H1 (cell line): ENCODE measurements at regions of chr4 and their contacts with region 1.

Region 1: DNA sequence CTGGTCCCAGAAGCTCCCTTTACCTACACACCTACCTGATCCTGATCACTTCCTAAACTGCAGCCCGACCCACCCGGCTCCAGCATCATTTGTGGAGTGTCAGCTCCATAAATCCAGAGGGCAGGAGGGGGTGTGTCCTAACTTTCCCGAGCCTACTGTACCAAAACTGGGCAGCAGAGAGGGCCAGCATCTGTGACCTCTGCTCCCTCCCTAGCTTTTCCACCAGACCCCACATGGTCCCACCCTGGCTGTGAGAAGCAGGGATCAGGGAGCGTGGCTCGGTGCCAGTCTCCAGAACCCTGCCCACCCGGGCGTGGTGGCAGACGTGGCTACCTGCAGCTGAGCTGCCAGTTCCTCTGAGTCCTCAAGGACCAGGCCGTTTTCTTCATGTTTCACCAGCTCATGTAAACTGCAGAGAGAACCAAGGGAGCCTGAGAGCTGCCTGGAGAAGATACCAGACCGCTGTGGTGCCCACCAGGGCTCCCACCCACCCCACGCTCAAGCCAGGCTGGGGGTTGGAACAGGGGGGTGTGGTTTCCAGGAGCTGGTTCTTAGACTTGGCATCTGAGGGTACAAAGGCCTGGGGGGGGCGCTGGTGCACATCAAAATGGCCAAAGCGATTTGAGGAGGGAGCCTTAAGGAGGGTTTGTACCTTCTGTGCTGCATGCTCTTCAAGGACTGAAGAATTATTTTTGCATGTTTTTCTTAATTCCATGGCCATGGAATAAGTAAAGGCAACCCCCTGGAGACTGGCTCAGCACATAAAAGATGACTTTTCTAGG is 76.7 kb upstream of the DRD5 start:
- DNase-seq: no peak
- H3K4me3 ChIP-seq: no peak overlapping the region
- H3K27ac ChIP-seq: no peak overlapping the region
- H3K4me1 ChIP-seq: no peaks in the 10 kb centered on the region
- H3K27me3 ChIP-seq: no peaks in the 10 kb centered on the region
- CTCF ChIP-seq: peak in 1 of 3 experiments; percentile 1; a peak in 1 of 4 replicates
- EP300 ChIP-seq: no peak
- POLR2A ChIP-seq: no peak
- RAD21 ChIP-seq: peak in 1 of 2 experiments; percentile 20; a peak in 1 of 4 replicates

Region 2: DNA sequence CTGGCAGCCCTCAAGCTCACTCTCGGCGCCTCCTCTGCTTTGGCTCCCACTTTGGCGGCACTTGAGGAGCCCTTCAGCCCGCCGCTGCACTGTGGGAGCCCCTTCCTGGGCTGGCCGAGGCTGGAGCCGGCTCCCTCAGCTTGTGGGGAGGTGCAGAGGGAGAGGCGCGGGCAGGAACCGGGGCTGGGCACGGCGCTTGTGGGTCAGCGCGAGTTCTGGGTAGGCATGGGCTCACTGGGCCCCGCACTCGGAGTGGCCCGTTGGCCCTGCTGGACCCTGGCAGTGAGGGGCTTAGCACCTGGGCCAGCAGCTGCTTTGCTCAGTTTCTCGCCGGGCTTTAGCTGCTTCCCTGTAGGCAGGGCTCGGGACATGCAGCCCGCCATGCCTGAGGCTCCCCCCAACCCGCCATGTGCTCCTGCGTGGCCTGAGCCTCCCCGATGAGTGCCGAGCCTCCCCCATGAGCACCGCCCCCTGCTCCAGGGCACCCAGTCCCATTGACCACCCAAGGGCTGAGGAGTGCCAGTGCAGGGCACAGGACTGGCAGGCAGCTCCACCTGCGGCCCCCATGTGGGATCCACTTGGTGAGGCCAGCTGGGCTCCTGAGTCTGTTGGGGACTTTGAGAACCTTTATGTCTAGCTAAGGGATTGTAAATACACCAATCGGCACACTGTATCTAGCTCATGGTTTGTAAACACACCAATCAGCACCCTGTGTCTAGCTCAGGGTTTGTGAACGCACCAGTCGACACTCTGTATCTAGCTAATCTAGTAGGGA is 24.9 kb before region 1 on chr4:
- CTCF ChIA-PET with region 1: no interaction called
- POLR2A ChIA-PET with region 1: no interaction called
- DNase-seq: no peak
- H3K4me3 ChIP-seq: no peak overlapping the region
- H3K27ac ChIP-seq: no peak overlapping the region
- H3K4me1 ChIP-seq: no peaks in the 10 kb centered on the region
- H3K27me3 ChIP-seq: no peaks in the 10 kb centered on the region
- CTCF ChIP-seq: no peak
- EP300 ChIP-seq: no peak
- POLR2A ChIP-seq: no peak
- RAD21 ChIP-seq: no peak

Region 3: DNA sequence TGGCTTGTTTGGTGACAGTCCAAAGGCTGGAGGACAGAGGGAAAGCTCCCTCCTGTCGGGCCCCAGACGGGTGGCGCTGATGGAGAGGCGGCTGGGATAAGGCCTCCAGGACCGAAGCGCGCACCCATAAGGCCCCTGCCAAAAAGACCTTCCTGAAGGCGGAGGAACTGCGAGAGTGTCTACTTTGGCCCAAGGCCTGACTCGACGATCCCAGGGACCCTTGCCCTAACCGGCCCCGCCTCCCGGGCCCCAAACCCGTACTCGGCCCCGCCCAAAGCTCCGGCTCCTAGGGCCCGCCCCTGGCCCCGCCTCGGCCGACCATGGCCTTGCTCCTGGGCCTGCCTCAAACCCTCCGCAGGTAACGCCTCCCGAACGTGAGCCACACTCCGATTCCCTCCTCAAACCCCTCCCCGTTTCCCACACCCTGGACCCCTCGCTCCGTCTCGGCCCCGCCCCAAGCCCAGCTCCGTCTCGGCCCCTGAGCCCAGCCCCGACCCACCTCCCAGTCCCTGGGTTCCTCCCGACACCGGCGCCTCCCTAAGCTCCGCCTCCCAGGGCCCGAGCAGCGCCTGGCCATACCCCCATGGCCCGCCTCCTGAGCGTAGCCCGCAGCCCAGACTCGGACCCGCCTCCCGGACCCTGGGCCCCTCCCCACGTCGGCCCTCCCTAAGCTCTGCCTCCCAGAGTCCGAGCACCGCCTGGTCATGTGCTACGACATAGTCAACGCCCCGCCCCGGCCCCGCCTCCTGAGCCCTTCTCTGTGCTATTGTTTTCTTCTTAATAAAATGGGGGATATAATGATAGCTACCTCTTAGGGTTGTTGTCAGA is 13.3 kb before region 1 on chr4:
- CTCF ChIA-PET with region 1: interaction called, 10 read pairs
- POLR2A ChIA-PET with region 1: interaction called, 3 read pairs
- DNase-seq: peak; percentile 92 to 97
- H3K4me3 ChIP-seq: peak overlapping the region; percentile 30 to 60 (median 46); a peak in 7 of 8 replicates
- H3K27ac ChIP-seq: peak overlapping the region; percentile 63; the same call in 1 of the 2 replicates
- H3K4me1 ChIP-seq: peaks cover 0 to 5% (median under 1%) of the 10 kb centered on the region in 4 experiments; a peak in 1 of 7 replicates
- H3K27me3 ChIP-seq: no peaks in the 10 kb centered on the region
- CTCF ChIP-seq: no peak
- EP300 ChIP-seq: no peak
- POLR2A ChIP-seq: peak in 1 of 2 experiments; percentile 47; a peak in 1 of 3 replicates
- RAD21 ChIP-seq: no peak

Region 4: DNA sequence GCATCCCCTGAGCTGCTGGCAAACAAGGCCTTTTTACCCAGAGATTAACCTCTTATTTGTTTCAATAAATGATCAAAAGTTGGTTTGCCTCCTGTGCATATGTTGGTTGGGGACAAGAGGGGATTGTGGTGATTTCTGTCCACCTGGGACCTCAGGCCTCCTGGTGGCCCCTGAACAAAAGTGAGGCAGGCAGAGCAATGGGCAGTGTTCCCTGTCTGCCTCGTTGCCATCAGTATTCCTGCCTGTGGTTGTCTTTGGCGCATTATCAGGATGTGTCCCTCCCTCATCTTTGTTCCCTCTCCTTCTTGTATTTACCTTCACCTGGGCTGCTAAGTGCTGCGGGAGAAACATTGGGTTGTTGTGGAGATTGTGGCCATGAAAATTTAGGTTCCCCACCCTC is 11.4 kb after region 1 on chr4:
- CTCF ChIA-PET with region 1: interaction called, 15 read pairs
- POLR2A ChIA-PET with region 1: no interaction called
- DNase-seq: no peak
- H3K4me3 ChIP-seq: no peak overlapping the region
- H3K27ac ChIP-seq: no peak overlapping the region
- H3K4me1 ChIP-seq: no peaks in the 10 kb centered on the region
- H3K27me3 ChIP-seq: no peaks in the 10 kb centered on the region
- CTCF ChIP-seq: no peak
- EP300 ChIP-seq: no peak
- POLR2A ChIP-seq: no peak
- RAD21 ChIP-seq: no peak

Region 5: DNA sequence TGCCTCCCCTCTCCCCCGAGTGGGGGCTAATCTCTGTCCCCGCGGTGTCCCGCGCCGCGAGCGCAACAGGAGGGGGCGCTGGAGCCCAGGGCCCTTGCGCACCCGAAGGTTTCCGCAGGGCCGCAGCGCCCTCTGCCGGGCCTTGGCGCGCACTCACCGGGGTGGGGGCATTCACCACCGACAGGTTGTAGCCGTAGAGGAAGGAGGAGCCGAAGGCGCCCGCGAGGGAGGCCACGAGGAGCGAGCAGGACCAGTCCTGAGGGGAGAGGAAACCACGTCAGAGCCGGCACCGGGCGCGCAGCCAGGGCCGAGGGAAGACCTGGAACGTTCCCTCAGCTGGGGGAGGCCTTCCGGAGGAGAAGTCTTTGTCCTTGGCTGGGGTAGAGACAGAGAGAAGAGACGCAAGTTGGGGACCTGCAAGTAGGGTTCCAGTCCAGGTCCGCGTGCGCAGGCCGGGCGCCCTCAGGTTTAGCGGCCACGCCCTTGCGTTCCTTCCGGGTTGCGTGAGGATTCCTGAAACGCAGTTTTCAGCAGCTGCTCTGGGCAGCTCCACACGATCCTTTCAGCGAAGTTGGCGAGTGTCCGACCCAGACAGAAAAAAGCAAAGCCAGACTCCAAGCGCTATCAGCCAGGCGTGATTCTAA is 314.2 kb after region 1 on chr4:
- CTCF ChIA-PET with region 1: interaction called, 86 read pairs
- POLR2A ChIA-PET with region 1: no interaction called
- DNase-seq: peak; percentile 79 to 99
- H3K4me3 ChIP-seq: peak overlapping the region; percentile 25 to 61 (median 48); a peak in 7 of 8 replicates
- H3K27ac ChIP-seq: peak overlapping the region; percentile 51; the same call in 1 of the 2 replicates
- H3K4me1 ChIP-seq: peaks cover 0 to 12% (median 4%) of the 10 kb centered on the region in 4 experiments; a peak in 5 of 7 replicates
- H3K27me3 ChIP-seq: peaks cover 0 to 12% (median 6%) of the 10 kb centered on the region in 4 experiments; a peak in 4 of 7 replicates
- CTCF ChIP-seq: peak in 2 of 3 experiments; percentile 96 to 100; a peak in 3 of 4 replicates
- EP300 ChIP-seq: no peak
- POLR2A ChIP-seq: no peak; a peak in 1 of 3 replicates
- RAD21 ChIP-seq: peak; percentile 91 to 96